Breast epithelium (tissue), 4 donors: ENCODE measurements at regions of chr3 and their contacts with region 1.

Region 1: GRCh38 chr3:63514673-63515072 is 137.8 kb upstream of the SNTN start:
- DNase-seq: no peak
- H3K4me3 ChIP-seq: no peak overlapping the region
- H3K27ac ChIP-seq: no peak overlapping the region
- H3K4me1 ChIP-seq: no peaks in the 10 kb centered on the region
- H3K27me3 ChIP-seq: no peaks in the 10 kb centered on the region
- CTCF ChIP-seq: no peak
- POLR2A ChIP-seq: no peak

Region 2: DNA sequence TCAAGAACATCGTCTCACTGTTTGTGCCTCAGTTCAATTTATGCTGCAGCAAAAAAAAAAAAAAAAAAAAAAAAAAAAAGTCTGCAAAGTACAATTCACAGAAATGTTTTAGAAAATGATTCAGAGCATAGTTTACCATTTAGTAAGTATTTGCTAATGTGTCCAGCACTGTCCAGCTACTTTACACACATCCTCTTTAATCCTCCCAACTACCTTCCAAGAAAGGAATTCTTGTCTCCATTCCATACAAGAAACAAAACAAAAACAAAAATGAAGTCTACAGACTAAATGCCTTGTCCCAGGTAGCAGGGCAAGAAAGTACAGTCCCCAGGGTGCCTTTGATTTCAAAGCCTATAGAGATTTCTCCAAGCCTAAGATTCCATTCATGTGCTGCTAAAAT is 98.9 kb after region 1 on chr3:
- intact Hi-C with region 1: no loop called
- DNase-seq: no peak
- H3K4me3 ChIP-seq: no peak overlapping the region
- H3K27ac ChIP-seq: no peak overlapping the region
- H3K4me1 ChIP-seq: no peaks in the 10 kb centered on the region
- H3K27me3 ChIP-seq: no peaks in the 10 kb centered on the region
- CTCF ChIP-seq: no peak
- POLR2A ChIP-seq: no peak

Region 3: DNA sequence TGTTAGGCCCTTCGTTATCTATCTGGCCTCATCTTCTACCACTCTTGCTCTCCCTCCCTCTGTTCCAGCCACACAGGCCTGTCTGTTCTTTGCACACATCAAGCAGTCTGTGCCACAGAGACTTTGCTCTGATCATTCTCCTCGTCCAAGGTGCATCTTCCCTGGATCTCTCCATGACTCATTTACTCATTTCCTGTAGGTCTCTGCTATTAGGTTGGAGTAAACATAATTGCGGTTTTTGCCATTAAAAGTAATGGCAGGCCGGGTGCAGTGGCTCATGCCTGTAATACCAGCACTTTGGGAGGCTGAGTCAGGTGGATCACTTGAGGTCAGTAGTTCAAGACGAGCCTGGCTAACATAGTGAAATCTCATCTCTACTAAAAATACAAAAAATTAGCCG is 294.9 kb after region 1 on chr3:
- intact Hi-C with region 1: loop called (anchors 5 kb)
- DNase-seq: no peak
- H3K4me3 ChIP-seq: no peak overlapping the region
- H3K27ac ChIP-seq: no peak overlapping the region
- H3K4me1 ChIP-seq: no peaks in the 10 kb centered on the region
- H3K27me3 ChIP-seq: no peaks in the 10 kb centered on the region
- CTCF ChIP-seq: no peak
- POLR2A ChIP-seq: no peak

Region 4: DNA sequence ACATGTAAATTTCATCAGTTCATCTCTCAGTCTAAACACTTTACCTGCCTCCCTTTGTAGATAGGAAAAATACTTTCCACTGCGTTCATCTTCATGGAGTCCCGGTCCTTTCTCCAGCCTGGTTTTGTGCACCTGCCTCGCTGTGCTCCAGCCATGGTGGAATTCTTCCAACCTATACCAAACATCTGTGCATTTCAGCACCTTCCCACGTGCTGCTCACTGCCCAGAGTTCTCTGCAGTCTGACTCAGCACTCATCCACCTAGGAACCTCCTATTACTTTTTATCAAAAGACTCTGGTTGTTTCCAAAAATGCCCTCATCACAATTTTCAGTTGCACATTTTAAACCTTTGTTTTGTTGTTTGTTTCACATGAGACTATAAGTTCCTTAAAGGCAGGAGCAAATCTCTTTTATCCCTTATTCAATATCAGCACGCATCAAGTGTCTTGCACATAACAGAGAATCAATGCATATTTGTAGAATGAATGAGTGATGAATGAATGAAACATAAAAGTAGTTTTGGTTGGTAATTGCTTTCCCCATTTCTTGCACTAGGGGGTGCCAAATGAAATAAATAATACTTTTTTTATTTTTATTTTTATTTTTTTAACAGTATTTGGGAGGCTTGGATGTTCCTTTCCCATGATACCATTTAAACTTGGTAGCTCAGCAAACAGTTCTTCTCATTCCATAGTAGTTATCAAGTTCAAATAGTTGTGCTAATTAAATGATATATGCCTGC is 1203.4 kb after region 1 on chr3:
- intact Hi-C with region 1: no loop called
- DNase-seq: no peak
- H3K4me3 ChIP-seq: no peak overlapping the region
- H3K27ac ChIP-seq: no peak overlapping the region
- H3K4me1 ChIP-seq: no peaks in the 10 kb centered on the region
- H3K27me3 ChIP-seq: no peaks in the 10 kb centered on the region
- CTCF ChIP-seq: no peak
- POLR2A ChIP-seq: no peak